GM10248 (cell line): ENCODE measurements at regions of chr1 and their contacts with region 1.

Region 1: DNA sequence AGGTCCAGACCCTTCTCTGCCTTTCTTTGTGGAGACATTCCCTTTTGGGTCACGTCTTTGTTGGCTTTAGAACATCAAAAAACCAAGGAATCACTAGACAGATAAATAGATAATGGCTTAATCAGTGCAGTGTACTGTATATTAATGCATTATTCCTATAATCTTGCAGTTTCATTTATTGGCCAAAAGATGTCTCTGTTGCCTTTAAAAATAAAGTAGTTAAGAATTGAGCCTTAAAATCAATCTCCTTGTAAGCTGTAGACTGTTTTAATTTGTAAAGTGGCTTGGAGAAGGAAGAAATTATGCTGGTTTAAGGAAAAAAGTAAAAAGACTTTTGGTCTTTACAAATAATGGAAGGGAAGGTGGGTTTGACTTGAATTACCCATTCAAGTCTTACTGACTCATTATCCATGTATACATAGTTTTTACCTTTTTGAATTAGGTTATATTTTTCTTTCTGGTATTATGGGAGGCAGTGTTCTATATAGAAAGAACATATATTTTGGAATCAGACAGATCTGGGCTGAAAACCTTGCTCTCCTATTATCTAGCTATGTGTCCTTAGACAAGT is 84.6 kb downstream of the VPS13D start:
- DNase-seq: peak; percentile 25
- CTCF ChIP-seq: peak; percentile 27

Region 2: GRCh38 chr1:12324423-12324822 is 10.0 kb after region 1 on chr1:
- CTCF ChIA-PET with region 1: interaction called, 13 read pairs
- POLR2A ChIA-PET with region 1: no interaction called
- DNase-seq: no peak
- CTCF ChIP-seq: no peak

Region 3: DNA sequence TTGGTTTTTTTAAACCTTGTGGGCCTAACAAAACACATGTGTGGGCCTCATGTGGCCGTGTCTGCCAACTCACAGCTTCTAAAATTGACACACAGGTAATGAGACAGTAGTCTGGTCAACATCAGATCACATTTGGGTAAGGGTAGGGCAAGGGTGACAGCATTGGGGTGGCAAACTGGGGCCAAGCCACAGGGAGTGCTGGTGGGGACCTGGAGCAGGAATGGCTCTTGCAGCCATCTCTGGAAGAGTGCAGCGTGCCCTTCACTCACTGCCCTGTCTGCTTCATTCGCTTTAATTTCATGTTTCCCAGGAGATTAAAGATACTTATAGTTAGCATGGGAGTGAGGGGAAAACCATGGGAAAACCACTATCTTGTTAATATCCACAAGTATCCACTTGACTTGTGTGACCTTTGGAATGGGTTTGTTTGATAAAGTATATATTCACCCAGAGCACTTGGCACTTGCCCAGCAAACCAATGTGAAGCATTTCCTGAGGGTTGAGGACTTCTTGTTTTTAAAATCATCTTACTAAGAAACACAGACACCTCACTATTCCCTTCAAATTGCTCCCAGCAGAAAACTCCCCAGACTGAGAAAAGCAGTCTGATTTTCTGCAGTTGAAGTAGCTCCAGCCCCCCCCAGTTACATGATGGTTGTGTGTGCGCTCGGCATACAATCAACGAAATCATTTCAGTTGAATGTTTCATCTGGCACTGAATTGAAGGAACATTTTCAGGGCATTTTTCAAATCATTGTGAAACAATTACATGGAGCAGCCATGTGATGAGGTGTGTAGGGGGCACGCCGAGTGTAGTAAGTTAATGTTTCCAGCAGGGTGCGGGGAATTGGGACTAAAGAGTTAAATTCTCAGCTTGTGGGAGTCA is 91.2 kb after region 1 on chr1:
- CTCF ChIA-PET with region 1: no interaction called
- POLR2A ChIA-PET with region 1: no interaction called
- DNase-seq: no peak
- CTCF ChIP-seq: no peak